CD8-positive, alpha-beta memory T cell (primary cell): ENCODE measurements at regions of chr3 and their contacts with region 1.

Region 1: GRCh38 chr3:141870091-141870687 is 6.3 kb upstream of the ATP1B3 start:
- DNase-seq: no peak
- H3K4me3 ChIP-seq: no peak overlapping the region
- H3K4me3 Mint-ChIP-seq: no peak overlapping the region
- H3K27ac ChIP-seq: no peak overlapping the region
- H3K27ac Mint-ChIP-seq: no peak overlapping the region
- H3K4me1 ChIP-seq: peaks cover 3% of the 10 kb centered on the region
- H3K4me1 Mint-ChIP-seq: peaks cover 1 to 6% (median 3%) of the 10 kb centered on the region in 3 donors
- H3K27me3 ChIP-seq: no peaks in the 10 kb centered on the region
- H3K27me3 Mint-ChIP-seq: no peaks in the 10 kb centered on the region

Region 2: DNA sequence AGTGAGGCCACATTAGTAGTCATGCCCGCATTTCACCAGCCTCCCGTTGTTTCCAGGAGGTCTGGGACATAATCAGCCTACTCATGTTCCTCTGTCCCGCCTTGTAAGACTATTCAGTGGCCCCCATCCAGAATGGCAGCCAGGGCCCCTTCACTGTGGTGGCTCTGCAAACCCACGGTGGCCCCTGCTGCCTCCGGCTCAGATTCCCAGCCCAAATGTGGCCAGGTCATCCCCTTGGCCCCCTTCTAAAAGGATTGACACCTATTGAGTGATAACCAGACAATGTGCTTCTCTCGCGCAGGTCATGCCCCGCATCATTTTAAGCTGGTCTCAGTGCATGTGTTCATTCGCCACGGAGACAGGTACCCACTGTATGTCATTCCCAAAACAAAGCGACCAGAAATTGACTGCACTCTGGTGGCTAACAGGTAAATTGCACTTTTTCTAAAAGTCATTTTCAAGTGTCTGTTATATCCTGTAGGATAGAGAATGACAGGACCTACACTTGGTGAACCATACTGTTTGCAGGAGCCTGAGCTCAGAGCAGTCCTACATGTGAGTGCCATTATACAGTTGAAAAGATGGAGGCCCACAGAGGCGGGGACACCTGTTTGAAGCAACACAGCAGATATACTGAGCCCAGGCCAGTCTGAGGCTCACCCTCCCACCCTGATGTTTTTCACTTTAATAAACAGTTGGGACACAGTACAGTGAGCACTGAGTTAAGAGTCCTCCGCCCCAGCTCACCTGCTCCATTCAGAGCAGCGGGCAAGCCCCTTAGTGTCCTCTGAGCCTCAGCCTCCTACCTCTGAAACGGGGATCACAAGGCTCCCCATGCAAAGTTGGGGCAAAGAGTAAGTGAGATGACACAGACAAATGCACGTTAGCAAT is 590.9 kb before region 1 on chr3:
- CTCF ChIA-PET with region 1: no interaction called
- POLR2A ChIA-PET with region 1: no interaction called
- DNase-seq: peak in 2 of 5 donors; percentile 18 to 39
- H3K4me3 ChIP-seq: no peak overlapping the region
- H3K4me3 Mint-ChIP-seq: peak overlapping the region in 1 of 7 donors; percentile 66
- H3K27ac ChIP-seq: no peak overlapping the region
- H3K27ac Mint-ChIP-seq: peak overlapping the region in 6 of 8 donors; percentile 8 to 70 (median 60)
- H3K4me1 ChIP-seq: peaks cover 19% of the 10 kb centered on the region
- H3K4me1 Mint-ChIP-seq: peaks cover 20 to 25% (median 21%) of the 10 kb centered on the region in 3 donors
- H3K27me3 ChIP-seq: no peaks in the 10 kb centered on the region
- H3K27me3 Mint-ChIP-seq: no peaks in the 10 kb centered on the region

Region 3: GRCh38 chr3:141913150-141913811 is 43.1 kb after region 1 on chr3:
- CTCF ChIA-PET with region 1: interaction called, 10 read pairs
- POLR2A ChIA-PET with region 1: interaction called, 7 read pairs
- DNase-seq: peak; percentile 14 to 61 (median 43)
- H3K4me3 ChIP-seq: no peak overlapping the region
- H3K4me3 Mint-ChIP-seq: no peak overlapping the region
- H3K27ac ChIP-seq: no peak overlapping the region
- H3K27ac Mint-ChIP-seq: peak overlapping the region in 6 of 8 donors; percentile 0 to 75 (median 38)
- H3K4me1 ChIP-seq: no peaks in the 10 kb centered on the region
- H3K4me1 Mint-ChIP-seq: peaks cover 0 to 4% (median 2%) of the 10 kb centered on the region in 3 donors
- H3K27me3 ChIP-seq: no peaks in the 10 kb centered on the region
- H3K27me3 Mint-ChIP-seq: no peaks in the 10 kb centered on the region